Calu3 (cell line): ENCODE measurements at regions of chr1 and their contacts with region 1.

Region 1: DNA sequence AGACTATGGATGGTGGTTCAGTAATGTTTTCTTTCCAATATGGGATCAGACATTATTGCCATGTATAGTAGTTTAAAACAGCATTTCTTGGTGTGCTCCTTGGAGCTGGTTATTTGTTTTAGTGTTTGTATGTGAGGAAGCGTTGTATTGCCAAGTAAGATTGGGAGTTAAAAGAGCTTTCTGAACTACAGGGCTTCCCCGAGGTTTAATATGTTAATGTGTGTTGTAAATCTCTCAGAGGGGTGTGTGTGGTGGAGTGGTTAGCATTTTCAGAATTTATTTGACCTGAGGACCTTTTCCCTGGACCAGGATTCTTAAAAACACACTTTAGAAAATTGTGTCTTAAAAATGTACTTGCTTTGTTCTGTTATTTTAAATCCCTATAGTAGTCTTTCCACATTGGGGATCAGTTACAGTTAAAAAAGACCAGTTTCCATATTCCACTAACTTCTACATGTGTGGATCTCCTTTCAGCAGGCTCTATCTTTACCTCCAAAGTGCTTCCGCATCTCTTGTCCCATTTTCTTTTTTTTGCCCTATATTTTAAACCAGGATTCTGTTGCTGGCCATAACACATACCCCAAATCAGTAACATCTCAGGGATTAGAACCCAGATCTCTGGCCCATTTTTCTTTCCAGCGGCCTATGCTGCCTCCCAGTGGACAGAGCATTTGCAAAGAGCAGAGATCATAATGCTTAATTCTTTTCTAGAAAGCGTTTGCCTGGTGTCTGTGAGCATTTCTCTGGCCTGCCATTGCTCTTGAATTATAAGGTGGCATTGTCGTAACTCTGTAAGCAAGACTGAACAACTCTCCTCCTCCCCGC is 58.6 kb downstream of the PBX1 start:
- DNase-seq: peak; percentile 54
- H3K4me3 Mint-ChIP-seq: no peak overlapping the region
- H3K27ac Mint-ChIP-seq: no peak overlapping the region
- H3K4me1 Mint-ChIP-seq: peaks cover 21% of the 10 kb centered on the region
- H3K27me3 Mint-ChIP-seq: no peaks in the 10 kb centered on the region
- CTCF ChIP-seq: peak; percentile 73

Region 2: GRCh38 chr1:163535807-163536206 is 1081.8 kb before region 1 on chr1:
- CTCF ChIA-PET with region 1: no interaction called
- intact Hi-C with region 1: loop called (anchors 5 kb)
- DNase-seq: no peak
- H3K4me3 Mint-ChIP-seq: no peak overlapping the region
- H3K27ac Mint-ChIP-seq: no peak overlapping the region
- H3K4me1 Mint-ChIP-seq: no peaks in the 10 kb centered on the region
- H3K27me3 Mint-ChIP-seq: peaks cover 9% of the 10 kb centered on the region
- CTCF ChIP-seq: no peak

Region 3: GRCh38 chr1:164240083-164240482 is 377.5 kb before region 1 on chr1:
- CTCF ChIA-PET with region 1: no interaction called
- intact Hi-C with region 1: loop called (anchors 5 kb)
- DNase-seq: peak; percentile 6
- H3K4me3 Mint-ChIP-seq: no peak overlapping the region
- H3K27ac Mint-ChIP-seq: no peak overlapping the region
- H3K4me1 Mint-ChIP-seq: no peaks in the 10 kb centered on the region
- H3K27me3 Mint-ChIP-seq: no peaks in the 10 kb centered on the region
- CTCF ChIP-seq: no peak

Region 4: DNA sequence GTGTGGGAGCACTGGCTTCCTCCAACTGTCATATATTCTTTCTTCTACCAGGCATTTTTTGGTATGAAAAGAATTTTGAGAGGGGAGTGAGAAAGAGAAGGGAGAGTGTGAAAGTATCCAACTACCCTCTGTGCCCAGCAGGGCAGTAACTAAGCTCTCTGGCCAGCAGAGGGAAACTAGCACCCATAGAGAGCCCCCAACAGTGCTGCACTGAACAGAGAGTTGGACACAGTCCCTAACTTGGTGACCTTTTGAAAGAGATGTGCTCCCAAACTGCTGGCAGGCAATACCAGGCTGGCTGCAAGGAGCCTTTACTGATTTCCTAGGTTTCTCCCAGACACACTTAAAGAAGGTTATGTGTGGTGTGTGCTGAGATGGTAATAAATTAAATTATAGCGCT is 177.4 kb before region 1 on chr1:
- CTCF ChIA-PET with region 1: no interaction called
- intact Hi-C with region 1: loop called (anchors 1 kb)
- DNase-seq: peak; percentile 11
- H3K4me3 Mint-ChIP-seq: no peak overlapping the region
- H3K27ac Mint-ChIP-seq: no peak overlapping the region
- H3K4me1 Mint-ChIP-seq: no peaks in the 10 kb centered on the region
- H3K27me3 Mint-ChIP-seq: no peaks in the 10 kb centered on the region
- CTCF ChIP-seq: peak; percentile 24

Region 5: GRCh38 chr1:164772635-164773034 is 155.0 kb after region 1 on chr1:
- CTCF ChIA-PET with region 1: no interaction called
- intact Hi-C with region 1: loop called (anchors 5 kb)
- DNase-seq: peak; percentile 74
- H3K4me3 Mint-ChIP-seq: no peak overlapping the region
- H3K27ac Mint-ChIP-seq: peak overlapping the region; percentile 26
- H3K4me1 Mint-ChIP-seq: peaks cover 90% of the 10 kb centered on the region
- H3K27me3 Mint-ChIP-seq: no peaks in the 10 kb centered on the region
- CTCF ChIP-seq: no peak

Region 6: DNA sequence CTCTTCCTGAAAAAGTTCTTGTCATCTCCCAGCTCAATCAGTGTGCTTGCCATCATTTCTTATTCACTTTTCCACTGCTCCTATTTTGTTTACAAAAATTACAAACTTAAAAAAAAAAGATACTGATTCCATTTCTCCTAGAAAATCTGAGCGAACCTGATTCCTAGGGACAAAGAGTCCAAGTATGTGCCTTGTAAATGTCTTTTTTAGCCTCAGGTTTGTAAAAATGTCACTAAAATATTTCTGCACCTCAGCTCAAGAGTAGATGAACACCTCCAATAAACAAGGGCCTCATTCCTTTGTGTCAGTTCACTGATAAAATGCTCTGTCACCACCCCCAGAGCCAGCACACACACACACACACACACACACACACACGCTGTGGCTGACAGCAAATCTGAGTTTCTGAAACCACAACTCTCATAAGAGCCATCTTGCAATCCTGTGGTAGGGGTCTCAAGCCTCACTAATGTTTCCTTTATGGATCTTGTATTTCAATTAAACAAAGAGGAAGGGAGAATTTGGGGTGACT is 240.6 kb after region 1 on chr1:
- CTCF ChIA-PET with region 1: no interaction called
- intact Hi-C with region 1: no loop called
- DNase-seq: no peak
- H3K4me3 Mint-ChIP-seq: no peak overlapping the region
- H3K27ac Mint-ChIP-seq: no peak overlapping the region
- H3K4me1 Mint-ChIP-seq: no peaks in the 10 kb centered on the region
- H3K27me3 Mint-ChIP-seq: peaks cover 22% of the 10 kb centered on the region
- CTCF ChIP-seq: no peak

Region 7: GRCh38 chr1:164914208-164914607 is 296.6 kb after region 1 on chr1:
- CTCF ChIA-PET with region 1: no interaction called
- intact Hi-C with region 1: loop called (anchors 10 kb)
- DNase-seq: no peak
- H3K4me3 Mint-ChIP-seq: no peak overlapping the region
- H3K27ac Mint-ChIP-seq: no peak overlapping the region
- H3K4me1 Mint-ChIP-seq: no peaks in the 10 kb centered on the region
- H3K27me3 Mint-ChIP-seq: peaks cover 24% of the 10 kb centered on the region
- CTCF ChIP-seq: no peak